ENCODE measurements at regions of chr4 and their contacts with region 1.

Region 1: DNA sequence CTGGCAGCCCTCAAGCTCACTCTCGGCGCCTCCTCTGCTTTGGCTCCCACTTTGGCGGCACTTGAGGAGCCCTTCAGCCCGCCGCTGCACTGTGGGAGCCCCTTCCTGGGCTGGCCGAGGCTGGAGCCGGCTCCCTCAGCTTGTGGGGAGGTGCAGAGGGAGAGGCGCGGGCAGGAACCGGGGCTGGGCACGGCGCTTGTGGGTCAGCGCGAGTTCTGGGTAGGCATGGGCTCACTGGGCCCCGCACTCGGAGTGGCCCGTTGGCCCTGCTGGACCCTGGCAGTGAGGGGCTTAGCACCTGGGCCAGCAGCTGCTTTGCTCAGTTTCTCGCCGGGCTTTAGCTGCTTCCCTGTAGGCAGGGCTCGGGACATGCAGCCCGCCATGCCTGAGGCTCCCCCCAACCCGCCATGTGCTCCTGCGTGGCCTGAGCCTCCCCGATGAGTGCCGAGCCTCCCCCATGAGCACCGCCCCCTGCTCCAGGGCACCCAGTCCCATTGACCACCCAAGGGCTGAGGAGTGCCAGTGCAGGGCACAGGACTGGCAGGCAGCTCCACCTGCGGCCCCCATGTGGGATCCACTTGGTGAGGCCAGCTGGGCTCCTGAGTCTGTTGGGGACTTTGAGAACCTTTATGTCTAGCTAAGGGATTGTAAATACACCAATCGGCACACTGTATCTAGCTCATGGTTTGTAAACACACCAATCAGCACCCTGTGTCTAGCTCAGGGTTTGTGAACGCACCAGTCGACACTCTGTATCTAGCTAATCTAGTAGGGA is 101.5 kb upstream of the DRD5 start:
- DNase-seq: no peak
- H3K4me3 ChIP-seq: no peak overlapping the region
- H3K27ac ChIP-seq: no peak overlapping the region
- H3K4me1 ChIP-seq: no peaks in the 10 kb centered on the region
- H3K27me3 ChIP-seq: no peaks in the 10 kb centered on the region
- CTCF ChIP-seq: no peak
- POLR2A ChIP-seq: no peak

Region 2: GRCh38 chr4:9704551-9705332 is 24.9 kb after region 1 on chr4:
- intact Hi-C with region 1: loop called (anchors 2 kb)
- DNase-seq: no peak
- H3K4me3 ChIP-seq: no peak overlapping the region
- H3K27ac ChIP-seq: no peak overlapping the region
- H3K4me1 ChIP-seq: no peaks in the 10 kb centered on the region
- H3K27me3 ChIP-seq: no peaks in the 10 kb centered on the region
- CTCF ChIP-seq: no peak
- POLR2A ChIP-seq: no peak

Measured in breast epithelium (tissue), 4 donors.